Adrenal gland (tissue), 19 donors: ENCODE measurements at regions of chr7 and their contacts with region 1.

Region 1: DNA sequence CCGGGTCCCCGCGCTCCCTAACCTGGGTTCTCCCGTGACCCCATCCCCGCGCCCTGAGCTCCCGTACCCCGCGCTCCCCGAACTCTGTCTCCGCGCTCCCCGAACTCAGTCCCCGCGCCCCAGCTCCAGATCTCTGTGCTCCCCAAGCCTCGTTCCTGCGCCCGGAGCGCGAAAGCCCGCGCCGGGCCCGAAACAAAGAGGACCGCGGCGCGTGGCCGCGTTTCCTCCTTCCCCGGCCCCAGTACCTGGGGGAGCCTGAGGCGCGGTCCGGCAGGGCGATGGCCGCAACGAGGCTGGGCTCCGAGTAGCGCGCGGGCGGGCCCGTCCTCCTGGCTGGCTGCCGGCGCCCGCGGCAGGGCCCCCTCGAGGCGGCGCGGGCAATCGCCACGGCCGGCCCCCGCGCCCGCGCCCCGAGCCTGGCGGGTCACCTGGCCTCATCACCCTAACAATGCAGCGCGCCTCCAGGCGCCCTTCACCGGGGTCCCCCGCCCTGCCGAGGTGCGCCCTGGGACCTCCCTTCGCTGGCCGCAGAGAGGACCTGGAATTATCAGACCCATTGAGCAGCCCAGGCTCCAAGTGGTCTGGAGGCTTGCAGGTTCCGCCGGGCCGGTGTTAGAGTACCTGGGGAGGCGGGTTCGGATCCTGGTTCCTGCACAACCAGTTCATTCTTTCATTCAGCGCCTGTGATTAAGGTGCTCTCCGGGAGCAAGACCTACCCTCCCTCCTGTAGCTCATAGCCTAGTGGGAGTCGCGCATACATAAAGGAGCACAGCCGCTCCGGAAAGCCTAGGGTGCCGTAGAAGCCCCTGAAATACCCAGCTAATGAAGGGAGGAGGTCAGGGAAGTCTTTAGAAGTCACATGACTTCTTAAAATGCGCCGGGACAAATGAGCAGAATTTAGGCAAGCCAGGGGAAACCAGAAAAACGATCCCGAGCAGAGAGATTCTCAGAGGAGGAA is at the start of gene TNS3:
- DNase-seq: peak in 6 of 7 donors; percentile 44 to 61 (median 52)
- H3K4me3 ChIP-seq: peak within 1 kb of the TSS; percentile 68 to 91 (median 82)
- H3K27ac ChIP-seq: peak within 1 kb of the TSS in 4 of 5 donors; percentile 78 to 91 (median 80)
- H3K4me1 ChIP-seq: peaks cover 35 to 53% of the 10 kb centered on the region in 2 donors
- H3K27me3 ChIP-seq: no peaks in the 10 kb centered on the region
- CTCF ChIP-seq: peak in 3 of 6 experiments; percentile 27 to 58 (median 34)
- POLR2A ChIP-seq: peak in 1 of 2 donors; percentile 57
- total RNA-seq, gene TNS3: 44.9 to 188 (median 125) TPM

Region 2: GRCh38 chr7:47266131-47266706 is 315.9 kb before region 1 on chr7:
- intact Hi-C with region 1: loop called in 1 of 2 experiments (anchors 10 kb)
- DNase-seq: peak; percentile 52 to 86 (median 56)
- H3K4me3 ChIP-seq: no peak overlapping the region
- H3K27ac ChIP-seq: peak overlapping the region in 1 of 5 donors; percentile 2
- H3K4me1 ChIP-seq: peaks cover 0 to 8% of the 10 kb centered on the region in 2 donors
- H3K27me3 ChIP-seq: no peaks in the 10 kb centered on the region
- CTCF ChIP-seq: peak; percentile 89 to 94 (median 94)
- POLR2A ChIP-seq: no peak